ENCODE measurements at regions of chr16 and their contacts with region 1.

Region 1: GRCh38 chr16:89442990-89443731 is 47.2 kb downstream of the ANKRD11 start:
- DNase-seq: peak in 1 of 9 experiments; percentile 29
- ATAC-seq: no peak
- H3K4me3 ChIP-seq: no peak overlapping the region
- H3K4me3 Mint-ChIP-seq: peak overlapping the region; percentile 71
- H3K27ac ChIP-seq: peak overlapping the region in 1 of 2 experiments; percentile 23
- H3K27ac Mint-ChIP-seq: peak overlapping the region; percentile 15
- H3K4me1 ChIP-seq: peaks cover 92% of the 10 kb centered on the region
- H3K4me1 Mint-ChIP-seq: peaks cover 93% of the 10 kb centered on the region
- H3K27me3 ChIP-seq: no peaks in the 10 kb centered on the region
- H3K27me3 Mint-ChIP-seq: no peaks in the 10 kb centered on the region
- CTCF ChIP-seq: no peak

Region 2: DNA sequence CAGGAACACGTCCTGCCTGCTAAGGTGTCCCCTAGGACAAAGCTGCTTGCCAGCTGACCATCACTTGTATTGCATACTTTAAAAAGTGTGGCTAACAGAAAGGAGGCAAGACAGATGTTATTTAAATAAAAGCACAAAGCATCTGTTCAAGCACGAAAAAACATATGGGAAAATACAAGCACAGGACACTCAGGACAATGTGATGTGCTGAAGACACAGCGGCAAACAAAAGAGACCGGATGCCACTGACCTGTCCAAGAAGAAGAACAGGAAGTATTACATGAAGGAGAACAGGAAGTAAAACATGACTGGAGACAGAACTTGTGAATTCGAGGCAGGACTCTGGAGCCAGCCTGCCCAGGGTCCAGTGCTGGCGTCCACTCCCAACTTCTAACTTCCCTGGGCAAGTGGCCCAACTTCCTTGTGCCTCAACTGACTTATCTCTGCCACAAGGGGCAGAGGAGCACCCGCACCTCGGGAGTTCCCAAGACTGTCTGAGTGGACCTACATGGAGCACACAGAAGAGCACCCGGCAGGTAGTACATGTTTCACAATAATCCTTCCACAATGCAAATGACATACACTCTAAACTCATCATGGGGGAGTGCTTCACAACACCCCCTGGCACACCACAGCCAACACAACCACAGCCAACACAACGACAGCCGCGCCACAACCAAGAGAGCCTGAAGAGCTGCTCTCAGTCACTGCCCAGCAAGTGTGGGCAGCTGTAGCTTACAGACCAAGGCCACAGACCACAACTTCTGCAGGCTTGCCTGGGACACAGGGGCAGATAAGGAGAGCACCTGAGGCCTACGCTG is 10.6 kb after region 1 on chr16:
- CTCF ChIA-PET with region 1: interaction called, 10 read pairs
- POLR2A ChIA-PET with region 1: interaction called, 4 read pairs
- intact Hi-C with region 1: loop called in 1 of 2 experiments (anchors 1 kb)
- DNase-seq: peak in 2 of 9 experiments; percentile 41 to 54
- ATAC-seq: peak; percentile 21
- H3K4me3 ChIP-seq: no peak overlapping the region
- H3K4me3 Mint-ChIP-seq: peak overlapping the region; percentile 48
- H3K27ac ChIP-seq: no peak overlapping the region
- H3K27ac Mint-ChIP-seq: peak overlapping the region; percentile 23
- H3K4me1 ChIP-seq: peaks cover 87% of the 10 kb centered on the region
- H3K4me1 Mint-ChIP-seq: peaks cover 80% of the 10 kb centered on the region
- H3K27me3 ChIP-seq: no peaks in the 10 kb centered on the region
- H3K27me3 Mint-ChIP-seq: no peaks in the 10 kb centered on the region
- CTCF ChIP-seq: no peak

Region 3: GRCh38 chr16:89498839-89499238 is 55.7 kb after region 1 on chr16:
- CTCF ChIA-PET with region 1: no interaction called
- POLR2A ChIA-PET with region 1: no interaction called
- intact Hi-C with region 1: no loop called
- DNase-seq: no peak
- ATAC-seq: no peak
- H3K4me3 ChIP-seq: no peak overlapping the region
- H3K4me3 Mint-ChIP-seq: no peak overlapping the region
- H3K27ac ChIP-seq: no peak overlapping the region
- H3K27ac Mint-ChIP-seq: no peak overlapping the region
- H3K4me1 ChIP-seq: no peaks in the 10 kb centered on the region
- H3K4me1 Mint-ChIP-seq: peaks cover 10% of the 10 kb centered on the region
- H3K27me3 ChIP-seq: no peaks in the 10 kb centered on the region
- H3K27me3 Mint-ChIP-seq: no peaks in the 10 kb centered on the region
- CTCF ChIP-seq: no peak

Region 4: DNA sequence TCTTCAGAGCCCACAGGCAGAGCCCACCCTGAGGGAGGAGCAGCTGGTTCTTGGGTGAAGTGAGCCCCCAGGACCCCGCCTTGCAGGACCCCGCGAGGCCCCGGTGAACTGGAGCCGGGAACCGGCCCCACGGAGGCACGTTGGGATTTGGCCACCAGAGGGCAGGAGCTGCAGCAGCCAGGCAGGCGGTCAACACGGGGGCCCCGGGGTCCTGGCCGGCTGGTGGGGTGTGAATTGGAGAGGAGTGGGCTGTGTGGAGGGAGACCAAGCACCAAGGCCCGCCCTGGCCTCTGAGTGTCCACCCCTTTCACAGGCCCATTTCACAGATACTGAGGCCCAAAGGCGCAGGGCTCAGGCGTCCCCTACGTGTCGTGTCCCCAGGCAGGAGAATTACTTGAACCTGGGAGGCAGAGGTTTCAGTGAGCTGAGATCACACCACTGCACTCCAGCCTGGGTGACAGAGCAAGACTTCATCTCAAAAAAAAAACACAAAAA is 172.5 kb after region 1 on chr16:
- CTCF ChIA-PET with region 1: no interaction called
- POLR2A ChIA-PET with region 1: no interaction called
- intact Hi-C with region 1: no loop called
- DNase-seq: peak in 4 of 9 experiments; percentile 30 to 65 (median 50)
- ATAC-seq: peak; percentile 43
- H3K4me3 ChIP-seq: no peak overlapping the region
- H3K4me3 Mint-ChIP-seq: no peak overlapping the region
- H3K27ac ChIP-seq: no peak overlapping the region
- H3K27ac Mint-ChIP-seq: no peak overlapping the region
- H3K4me1 ChIP-seq: peaks cover 15% of the 10 kb centered on the region
- H3K4me1 Mint-ChIP-seq: peaks cover 12% of the 10 kb centered on the region
- H3K27me3 ChIP-seq: no peaks in the 10 kb centered on the region
- H3K27me3 Mint-ChIP-seq: no peaks in the 10 kb centered on the region
- CTCF ChIP-seq: no peak

Region 5: DNA sequence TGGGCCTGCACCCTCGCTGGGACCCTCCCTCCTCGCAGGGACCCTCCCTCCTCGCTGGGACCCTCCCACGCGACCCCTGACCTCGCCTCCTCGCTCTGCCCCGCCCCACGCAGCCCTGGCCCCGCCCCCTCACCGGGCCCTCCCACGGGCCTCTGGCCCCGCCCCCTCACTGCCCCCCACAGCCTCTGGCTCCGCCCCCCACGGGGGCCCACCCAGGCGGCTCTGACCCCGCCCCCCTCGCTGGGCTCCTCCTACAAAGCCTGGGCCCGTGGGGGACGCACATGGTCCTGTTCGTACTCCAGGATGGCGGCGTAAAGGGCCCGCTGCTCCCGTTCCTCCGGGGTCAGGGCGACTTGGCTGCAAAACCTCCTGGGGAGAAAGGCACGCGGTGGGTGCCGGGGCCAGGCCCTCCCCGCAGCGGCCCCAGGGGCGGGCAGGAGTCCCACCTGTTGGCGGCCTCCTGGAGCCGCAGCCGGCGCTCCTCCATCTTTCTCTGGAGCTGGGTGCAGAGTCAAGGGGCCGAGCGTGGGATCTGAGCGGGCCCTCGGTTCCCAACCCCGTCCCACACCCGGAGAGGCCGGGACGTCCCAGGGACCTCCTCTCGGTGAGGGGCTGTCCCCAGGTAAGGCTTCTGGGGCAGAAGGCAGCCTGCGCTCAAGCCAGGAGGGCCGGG is 268.6 kb after region 1 on chr16:
- CTCF ChIA-PET with region 1: no interaction called
- POLR2A ChIA-PET with region 1: no interaction called
- intact Hi-C with region 1: no loop called
- DNase-seq: peak; percentile 55 to 87 (median 71)
- ATAC-seq: peak; percentile 98
- H3K4me3 ChIP-seq: peak overlapping the region; percentile 48 to 68
- H3K4me3 Mint-ChIP-seq: peak overlapping the region; percentile 65
- H3K27ac ChIP-seq: no peak overlapping the region
- H3K27ac Mint-ChIP-seq: no peak overlapping the region
- H3K4me1 ChIP-seq: peaks cover 12% of the 10 kb centered on the region
- H3K4me1 Mint-ChIP-seq: peaks cover 1% of the 10 kb centered on the region
- H3K27me3 ChIP-seq: no peaks in the 10 kb centered on the region
- H3K27me3 Mint-ChIP-seq: no peaks in the 10 kb centered on the region
- CTCF ChIP-seq: no peak

Measured in CD8-positive, alpha-beta T cell (primary cell).